ENCODE measurements at regions of chr9 and their contacts with region 1.

Region 1: GRCh38 chr9:124551472-124552272 is 44.5 kb upstream of the NR5A1 start:
- DNase-seq: peak in 6 of 7 donors; percentile 49 to 73 (median 66)
- H3K4me3 ChIP-seq: no peak overlapping the region
- H3K27ac ChIP-seq: no peak overlapping the region
- H3K4me1 ChIP-seq: no peaks in the 10 kb centered on the region
- H3K27me3 ChIP-seq: no peaks in the 10 kb centered on the region
- CTCF ChIP-seq: peak; percentile 45 to 65 (median 59)
- POLR2A ChIP-seq: no peak

Region 2: DNA sequence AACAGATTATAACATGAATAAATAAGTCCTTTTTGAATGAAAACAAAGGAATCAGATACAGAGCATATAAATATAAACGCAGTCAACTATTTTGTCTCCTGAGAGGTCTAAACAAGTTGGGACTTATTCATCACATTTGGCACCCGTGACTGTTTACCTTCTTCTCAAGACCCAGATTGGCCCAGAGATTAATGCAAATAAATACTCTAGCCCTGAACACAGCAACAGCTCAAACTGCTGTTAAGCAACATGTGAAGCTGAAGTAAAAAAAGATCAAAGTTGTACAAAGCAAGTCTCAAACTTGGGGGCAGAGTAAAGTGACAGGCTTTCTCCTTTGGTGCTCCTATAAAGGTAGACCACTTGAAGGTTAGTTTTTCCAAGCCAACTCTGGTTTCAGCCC is 50.5 kb after region 1 on chr9:
- intact Hi-C with region 1: no loop called
- DNase-seq: no peak
- H3K4me3 ChIP-seq: no peak overlapping the region
- H3K27ac ChIP-seq: no peak overlapping the region
- H3K4me1 ChIP-seq: no peaks in the 10 kb centered on the region
- H3K27me3 ChIP-seq: no peaks in the 10 kb centered on the region
- CTCF ChIP-seq: no peak
- POLR2A ChIP-seq: no peak

Region 3: DNA sequence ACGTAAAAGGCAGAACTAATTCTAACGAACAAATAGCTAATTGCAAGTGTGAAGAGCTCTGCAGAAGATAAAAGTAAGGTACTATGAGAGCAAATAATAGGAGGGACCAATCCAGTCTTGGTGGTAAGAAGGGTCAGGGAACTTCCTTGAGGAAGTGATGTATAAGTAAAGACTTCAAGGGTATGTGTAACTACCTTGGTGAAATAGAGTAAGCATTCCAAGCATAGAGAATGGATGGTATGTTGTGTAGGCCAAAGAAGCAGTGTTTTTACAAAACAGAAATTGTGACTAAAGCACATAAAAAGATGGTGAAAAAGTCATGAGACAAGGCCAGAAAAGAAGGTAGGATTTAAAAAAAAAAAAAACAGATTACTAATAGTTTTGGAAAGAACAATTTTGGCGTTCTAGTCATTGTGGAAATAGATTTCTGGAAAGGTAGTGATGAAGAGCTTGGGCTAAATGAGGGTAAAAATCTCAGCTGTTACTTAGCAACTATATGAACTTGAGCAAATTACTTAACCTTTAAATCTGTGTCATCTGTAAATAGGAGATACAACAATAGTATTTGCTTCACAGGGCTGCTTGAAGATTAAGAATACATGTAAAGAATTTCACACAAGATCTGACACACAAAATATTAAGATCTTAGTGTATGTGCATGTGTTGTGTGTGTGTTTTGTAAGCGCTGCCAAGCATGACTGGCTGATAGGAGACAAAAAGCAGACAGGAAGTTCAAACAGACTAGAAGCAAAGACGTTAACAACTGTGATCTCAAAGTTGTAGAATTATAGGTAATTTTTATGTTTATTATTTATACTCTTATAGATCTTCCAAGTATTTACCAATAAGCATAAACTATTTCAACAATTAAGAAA is 145.9 kb after region 1 on chr9:
- intact Hi-C with region 1: no loop called
- DNase-seq: no peak
- H3K4me3 ChIP-seq: no peak overlapping the region
- H3K27ac ChIP-seq: no peak overlapping the region
- H3K4me1 ChIP-seq: no peaks in the 10 kb centered on the region
- H3K27me3 ChIP-seq: no peaks in the 10 kb centered on the region
- CTCF ChIP-seq: no peak
- POLR2A ChIP-seq: no peak

Region 4: DNA sequence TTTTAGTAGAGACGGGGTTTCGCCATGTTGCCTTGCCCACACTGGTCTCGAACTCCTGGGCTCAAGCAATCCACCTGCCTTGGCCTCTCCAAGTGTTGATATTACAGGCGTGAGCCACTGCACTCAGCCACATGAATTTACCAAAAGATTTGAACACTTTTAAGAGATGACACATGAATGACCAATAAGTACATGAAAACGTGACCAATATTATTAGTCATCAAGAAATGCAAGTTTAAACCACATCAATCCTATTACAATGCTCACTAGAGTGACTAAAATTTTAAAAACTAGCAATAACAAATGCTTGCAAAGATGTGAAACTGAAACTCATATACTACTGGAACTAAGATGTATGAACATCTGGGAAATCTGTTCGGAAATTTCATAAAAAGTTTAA is 165.1 kb after region 1 on chr9:
- intact Hi-C with region 1: loop called in 1 of 2 experiments (anchors 10 kb)
- DNase-seq: no peak
- H3K4me3 ChIP-seq: no peak overlapping the region
- H3K27ac ChIP-seq: no peak overlapping the region
- H3K4me1 ChIP-seq: peaks cover 13 to 15% of the 10 kb centered on the region in 2 donors
- H3K27me3 ChIP-seq: no peaks in the 10 kb centered on the region
- CTCF ChIP-seq: no peak
- POLR2A ChIP-seq: no peak

Measured in adrenal gland (tissue), 19 donors.